GM13976 (cell line): ENCODE measurements at regions of chr12 and their contacts with region 1.

Region 1: DNA sequence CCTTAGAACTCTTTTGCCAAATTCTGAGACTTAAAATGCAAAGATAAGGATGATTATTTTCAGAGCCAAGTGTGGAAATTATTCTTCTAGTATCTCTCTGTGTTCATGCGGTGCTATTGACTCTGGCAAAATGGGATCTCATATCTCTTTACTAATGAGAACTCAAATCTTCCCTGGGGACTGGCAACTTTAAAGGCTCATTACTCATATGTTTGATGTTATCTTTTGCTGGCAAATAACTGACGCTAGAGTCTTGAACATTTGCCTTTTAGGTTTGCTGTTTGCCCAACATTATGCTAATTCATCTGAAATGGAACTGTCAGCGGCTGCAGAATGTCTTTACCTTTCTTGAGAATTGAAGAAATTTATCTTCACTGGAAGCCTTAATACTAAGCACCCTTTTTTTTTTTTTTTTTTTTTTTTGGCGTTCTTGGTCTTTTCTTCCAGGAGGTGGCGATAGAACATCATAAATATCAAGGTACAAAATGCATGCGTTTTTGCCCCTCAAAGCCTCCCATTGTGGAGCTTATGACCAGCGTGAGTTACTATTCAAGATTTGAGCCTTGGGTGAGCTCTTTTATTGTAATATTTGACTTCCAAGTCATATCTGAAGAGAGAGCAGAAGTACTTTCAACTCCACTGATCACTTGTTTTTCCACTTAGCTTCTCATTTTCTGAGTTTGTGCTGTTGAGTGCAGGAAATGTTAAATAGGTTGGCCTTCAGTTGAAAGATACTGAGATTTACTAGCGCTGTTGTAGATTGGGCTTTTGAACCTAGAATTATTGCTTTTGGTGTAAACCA is 86.6 kb downstream of the CAND1 start:
- DNase-seq: peak; percentile 13
- CTCF ChIP-seq: no peak

Region 2: GRCh38 chr12:67592216-67593011 is 236.6 kb after region 1 on chr12:
- in situ Hi-C with region 1: no loop called
- DNase-seq: peak; percentile 17
- CTCF ChIP-seq: no peak

Region 3: GRCh38 chr12:67943226-67943892 is 587.6 kb after region 1 on chr12:
- in situ Hi-C with region 1: loop called (anchors 10 kb)
- DNase-seq: peak; percentile 41
- CTCF ChIP-seq: peak; percentile 55